ENCODE measurements at regions of chr2 and their contacts with region 1.

Region 1: DNA sequence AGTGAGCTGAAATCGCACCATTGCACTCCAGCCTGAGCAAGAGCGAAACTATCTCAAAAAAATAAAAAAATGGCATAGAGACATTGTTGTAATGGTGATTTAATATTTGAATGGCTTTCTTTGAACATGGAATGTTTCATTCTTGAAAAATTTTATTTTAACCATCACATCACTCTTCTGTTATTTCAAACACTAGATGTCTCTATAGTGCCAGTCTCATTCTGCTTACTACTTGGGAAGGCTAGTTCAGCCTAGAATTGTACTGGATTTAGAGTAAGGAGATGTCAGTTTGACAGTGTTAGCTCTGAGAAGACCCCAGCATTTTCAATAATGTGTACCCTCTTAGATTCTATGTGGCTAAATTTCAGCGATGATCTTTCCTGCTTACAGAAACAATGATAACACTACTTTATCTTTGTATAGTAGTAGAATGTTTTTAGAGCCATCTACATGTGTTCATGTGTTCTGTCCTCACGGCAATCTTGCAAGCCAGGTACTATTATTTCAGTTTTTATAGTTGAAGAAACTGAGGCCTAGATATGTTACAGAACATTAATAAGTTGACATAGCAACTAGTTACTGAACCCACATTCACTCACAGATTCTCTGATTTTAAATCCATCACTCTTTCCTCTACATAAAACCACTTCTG is 142.9 kb upstream of the ZSWIM2 start:
- DNase-seq: no peak
- ATAC-seq: no peak
- H3K4me3 ChIP-seq: no peak overlapping the region
- H3K27ac ChIP-seq: no peak overlapping the region
- H3K4me1 ChIP-seq: no peaks in the 10 kb centered on the region
- H3K27me3 ChIP-seq: no peaks in the 10 kb centered on the region
- CTCF ChIP-seq: peak; percentile 20

Region 2: DNA sequence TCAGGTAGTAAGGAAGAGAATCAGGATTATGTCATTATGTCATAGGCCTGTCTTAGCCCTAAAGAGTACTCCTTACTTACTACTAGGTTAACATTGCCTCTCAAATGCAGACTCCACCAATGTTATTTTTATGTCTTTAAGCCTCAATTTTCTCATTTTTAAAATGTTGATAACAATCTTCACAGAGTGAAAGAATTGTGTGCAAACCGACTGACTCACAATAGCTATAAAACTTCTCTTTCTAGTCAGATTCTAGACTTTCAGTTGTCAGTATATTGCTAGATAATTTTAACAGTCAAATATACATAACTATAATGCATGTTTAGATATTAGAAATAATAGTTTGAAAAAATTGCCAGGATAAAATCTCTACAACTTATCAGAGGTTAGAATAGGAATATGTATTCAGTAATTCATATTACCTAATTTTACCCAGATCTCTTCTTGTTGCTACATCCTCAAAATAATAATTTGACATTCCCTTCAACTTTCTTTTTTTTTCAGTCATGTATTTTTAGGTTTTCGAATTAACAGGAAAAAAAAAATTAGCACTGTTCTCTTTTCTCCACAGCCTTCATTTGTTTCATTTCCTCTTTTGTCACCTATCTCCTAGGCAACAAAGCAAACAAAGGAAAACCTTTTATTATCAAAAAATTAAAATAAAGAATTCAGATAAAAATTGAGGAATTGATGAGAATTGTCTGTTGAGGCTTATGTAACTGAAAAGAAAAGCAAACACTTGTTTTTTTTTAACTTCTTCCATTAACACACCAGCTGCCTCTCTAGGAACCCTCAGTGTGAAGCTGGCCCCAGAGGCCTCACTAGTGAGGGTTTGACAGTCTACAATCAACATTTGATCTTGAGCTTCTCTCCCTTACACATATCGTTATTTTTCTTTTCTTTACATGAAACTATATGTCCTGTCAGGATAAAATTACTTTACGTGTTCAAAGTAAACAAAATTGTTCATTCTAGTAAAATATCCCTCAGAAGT is 177.1 kb after region 1 on chr2:
- intact Hi-C with region 1: no loop called
- DNase-seq: no peak
- ATAC-seq: peak in 1 of 2 donors; percentile 51
- H3K4me3 ChIP-seq: no peak overlapping the region
- H3K27ac ChIP-seq: no peak overlapping the region
- H3K4me1 ChIP-seq: no peaks in the 10 kb centered on the region
- H3K27me3 ChIP-seq: no peaks in the 10 kb centered on the region
- CTCF ChIP-seq: no peak

Region 3: GRCh38 chr2:187271825-187272224 is 279.9 kb after region 1 on chr2:
- intact Hi-C with region 1: loop called (anchors 10 kb)
- DNase-seq: no peak
- ATAC-seq: no peak
- H3K4me3 ChIP-seq: no peak overlapping the region
- H3K27ac ChIP-seq: no peak overlapping the region
- H3K4me1 ChIP-seq: no peaks in the 10 kb centered on the region
- H3K27me3 ChIP-seq: no peaks in the 10 kb centered on the region
- CTCF ChIP-seq: no peak